Heart right ventricle (tissue), 16 donors: ENCODE measurements at regions of chr7 and their contacts with region 1.

Region 1: GRCh38 chr7:14085901-14086300 is 96.4 kb upstream of the ETV1 start:
- DNase-seq: no peak
- ATAC-seq: no peak
- H3K4me3 ChIP-seq: no peak overlapping the region
- H3K27ac ChIP-seq: no peak overlapping the region
- H3K4me1 ChIP-seq: no peaks in the 10 kb centered on the region
- H3K27me3 ChIP-seq: no peaks in the 10 kb centered on the region
- CTCF ChIP-seq: no peak

Region 2: DNA sequence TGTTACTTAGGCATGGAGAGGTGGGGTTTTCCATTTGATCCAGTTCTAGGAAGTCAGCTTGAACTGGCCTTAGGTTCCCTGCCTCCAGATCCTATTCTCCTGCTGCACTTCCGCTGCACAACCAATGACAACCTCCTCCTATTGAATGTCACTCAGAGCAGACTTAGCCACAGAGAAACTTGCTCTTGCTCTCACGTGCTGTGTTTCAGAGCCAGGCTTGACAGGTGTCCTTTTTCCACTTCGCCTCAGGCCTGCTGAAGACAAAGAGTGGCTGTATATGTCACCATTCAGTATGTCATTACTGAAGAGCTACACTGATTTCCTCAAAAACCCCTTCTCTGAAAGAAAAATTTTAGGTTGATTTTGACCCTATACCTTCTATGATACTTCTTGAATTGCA is 19.0 kb after region 1 on chr7:
- intact Hi-C with region 1: loop called in 1 of 10 experiments (anchors 1 kb)
- DNase-seq: no peak
- ATAC-seq: no peak
- H3K4me3 ChIP-seq: no peak overlapping the region
- H3K27ac ChIP-seq: no peak overlapping the region
- H3K4me1 ChIP-seq: no peaks in the 10 kb centered on the region
- H3K27me3 ChIP-seq: no peaks in the 10 kb centered on the region
- CTCF ChIP-seq: no peak